ENCODE measurements at regions of chr4 and their contacts with region 1.

Region 1: GRCh38 chr4:14434916-14435315 is 567.4 kb upstream of the CPEB2 start:
- DNase-seq: no peak
- ATAC-seq: no peak
- H3K4me3 ChIP-seq: no peak overlapping the region
- H3K27ac ChIP-seq: no peak overlapping the region
- H3K4me1 ChIP-seq: no peaks in the 10 kb centered on the region
- H3K27me3 ChIP-seq: no peaks in the 10 kb centered on the region
- CTCF ChIP-seq: no peak

Region 2: GRCh38 chr4:13656569-13657405 is 778.1 kb before region 1 on chr4:
- intact Hi-C with region 1: loop called (anchors 5 kb)
- DNase-seq: peak; percentile 72
- ATAC-seq: peak; percentile 74
- H3K4me3 ChIP-seq: peak overlapping the region; percentile 25
- H3K27ac ChIP-seq: no peak overlapping the region
- H3K4me1 ChIP-seq: peaks cover 5% of the 10 kb centered on the region
- H3K27me3 ChIP-seq: peaks cover 3% of the 10 kb centered on the region
- CTCF ChIP-seq: peak; percentile 83

Region 3: GRCh38 chr4:14254252-14254651 is 180.7 kb before region 1 on chr4:
- intact Hi-C with region 1: no loop called
- DNase-seq: peak; percentile 60
- ATAC-seq: peak; percentile 88
- H3K4me3 ChIP-seq: no peak overlapping the region
- H3K27ac ChIP-seq: no peak overlapping the region
- H3K4me1 ChIP-seq: no peaks in the 10 kb centered on the region
- H3K27me3 ChIP-seq: no peaks in the 10 kb centered on the region
- CTCF ChIP-seq: peak; percentile 64

Region 4: GRCh38 chr4:14336656-14337055 is 98.3 kb before region 1 on chr4:
- intact Hi-C with region 1: no loop called
- DNase-seq: no peak
- ATAC-seq: no peak
- H3K4me3 ChIP-seq: no peak overlapping the region
- H3K27ac ChIP-seq: no peak overlapping the region
- H3K4me1 ChIP-seq: no peaks in the 10 kb centered on the region
- H3K27me3 ChIP-seq: no peaks in the 10 kb centered on the region
- CTCF ChIP-seq: no peak

Region 5: DNA sequence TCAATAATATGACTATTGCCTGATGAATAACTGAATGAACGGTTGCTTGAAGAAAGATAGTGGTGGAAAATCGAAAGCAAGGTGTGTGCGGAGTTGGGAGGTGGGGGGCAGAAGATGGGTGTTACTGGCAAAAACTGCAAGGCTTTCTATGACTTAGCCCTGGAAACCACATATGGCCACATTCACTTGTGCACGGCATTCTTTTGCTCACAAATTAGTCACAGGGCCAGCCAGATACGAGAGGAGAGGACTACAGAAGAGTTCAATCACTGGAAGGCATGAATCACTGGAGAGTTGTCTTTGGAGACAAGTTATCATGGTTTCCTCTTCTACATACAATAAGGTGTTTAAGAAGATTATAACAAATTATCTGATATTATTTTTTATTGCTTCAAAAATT is 59.1 kb before region 1 on chr4:
- intact Hi-C with region 1: no loop called
- DNase-seq: no peak
- ATAC-seq: no peak
- H3K4me3 ChIP-seq: no peak overlapping the region
- H3K27ac ChIP-seq: no peak overlapping the region
- H3K4me1 ChIP-seq: no peaks in the 10 kb centered on the region
- H3K27me3 ChIP-seq: no peaks in the 10 kb centered on the region
- CTCF ChIP-seq: no peak

Measured in upper lobe of right lung (tissue), 1 donor.